ENCODE measurements at regions of chr13 and their contacts with region 1.

Region 1: DNA sequence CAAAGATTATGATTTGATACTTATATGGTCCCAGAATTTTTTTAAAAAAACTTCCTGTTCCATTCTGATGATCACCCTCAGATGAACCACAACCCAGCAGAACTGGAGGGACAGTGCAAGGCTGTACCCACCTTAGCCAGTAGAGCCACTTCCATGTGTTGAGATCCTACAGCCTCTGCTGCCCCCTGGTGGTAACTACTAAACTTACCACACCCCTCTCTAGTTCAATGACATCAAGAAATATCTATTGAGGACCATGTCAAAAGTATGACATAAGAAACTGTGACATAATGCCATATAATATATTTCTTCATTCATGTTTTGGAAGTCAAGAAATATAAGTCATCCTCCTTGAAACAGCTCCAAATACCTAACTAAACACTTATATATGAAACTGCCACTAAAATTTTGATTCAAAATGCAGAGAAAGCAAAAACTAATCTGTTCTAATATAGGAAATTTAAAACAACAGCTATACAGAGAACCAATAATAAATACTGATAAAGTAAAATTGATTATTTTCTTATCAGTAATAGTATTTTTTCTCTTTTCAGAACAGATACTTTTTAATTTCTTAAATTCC is 412.6 kb downstream of the KCTD12 start:
- DNase-seq: peak; percentile 82
- H3K4me3 ChIP-seq: no peak overlapping the region
- H3K27ac ChIP-seq: no peak overlapping the region
- H3K4me1 ChIP-seq: no peaks in the 10 kb centered on the region
- H3K27me3 ChIP-seq: peaks cover 14% of the 10 kb centered on the region
- CTCF ChIP-seq: peak; percentile 78

Region 2: GRCh38 chr13:75687150-75687763 is 786.4 kb before region 1 on chr13:
- CTCF ChIA-PET with region 1: no interaction called
- POLR2A ChIA-PET with region 1: interaction called, 15 read pairs
- intact Hi-C with region 1: no loop called
- DNase-seq: peak; percentile 66
- H3K4me3 ChIP-seq: no peak overlapping the region
- H3K27ac ChIP-seq: no peak overlapping the region
- H3K4me1 ChIP-seq: no peaks in the 10 kb centered on the region
- H3K27me3 ChIP-seq: no peaks in the 10 kb centered on the region
- CTCF ChIP-seq: peak; percentile 66

Region 3: DNA sequence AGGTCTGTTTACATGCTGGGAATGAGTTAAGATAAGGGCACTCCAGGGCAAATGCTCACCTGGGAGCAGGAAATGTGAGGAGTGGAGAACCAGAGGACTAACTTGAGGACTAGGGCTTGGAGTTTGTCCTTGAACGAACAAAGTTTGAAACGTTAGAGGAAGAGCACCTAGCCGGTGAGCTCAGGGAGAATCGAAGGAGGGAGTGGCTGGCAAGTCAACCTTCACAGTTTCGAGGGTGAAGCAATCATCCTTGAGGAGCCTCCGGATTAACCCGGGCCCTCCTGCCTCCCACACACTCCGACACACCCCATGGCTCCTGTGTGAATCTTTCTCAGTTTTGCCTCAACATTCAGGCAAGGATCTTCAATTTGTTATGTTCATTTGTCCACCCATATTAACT is 778.9 kb before region 1 on chr13:
- CTCF ChIA-PET with region 1: no interaction called
- POLR2A ChIA-PET with region 1: no interaction called
- intact Hi-C with region 1: loop called (anchors 2 kb)
- DNase-seq: no peak
- H3K4me3 ChIP-seq: no peak overlapping the region
- H3K27ac ChIP-seq: no peak overlapping the region
- H3K4me1 ChIP-seq: no peaks in the 10 kb centered on the region
- H3K27me3 ChIP-seq: no peaks in the 10 kb centered on the region
- CTCF ChIP-seq: no peak

Region 4: GRCh38 chr13:75876360-75877050 is 597.1 kb before region 1 on chr13:
- CTCF ChIA-PET with region 1: no interaction called
- POLR2A ChIA-PET with region 1: no interaction called
- intact Hi-C with region 1: loop called (anchors 2 kb)
- DNase-seq: peak; percentile 67
- H3K4me3 ChIP-seq: no peak overlapping the region
- H3K27ac ChIP-seq: no peak overlapping the region
- H3K4me1 ChIP-seq: no peaks in the 10 kb centered on the region
- H3K27me3 ChIP-seq: peaks cover 10% of the 10 kb centered on the region
- CTCF ChIP-seq: peak; percentile 93

Region 5: GRCh38 chr13:76016799-76017400 is 456.7 kb before region 1 on chr13:
- CTCF ChIA-PET with region 1: no interaction called
- POLR2A ChIA-PET with region 1: no interaction called
- intact Hi-C with region 1: loop called (anchors 5 kb)
- DNase-seq: peak; percentile 48
- H3K4me3 ChIP-seq: no peak overlapping the region
- H3K27ac ChIP-seq: no peak overlapping the region
- H3K4me1 ChIP-seq: no peaks in the 10 kb centered on the region
- H3K27me3 ChIP-seq: peaks cover 7% of the 10 kb centered on the region
- CTCF ChIP-seq: peak; percentile 74

Region 6: GRCh38 chr13:76053181-76053580 is 420.5 kb before region 1 on chr13:
- CTCF ChIA-PET with region 1: no interaction called
- POLR2A ChIA-PET with region 1: no interaction called
- intact Hi-C with region 1: no loop called
- DNase-seq: no peak
- H3K4me3 ChIP-seq: no peak overlapping the region
- H3K27ac ChIP-seq: no peak overlapping the region
- H3K4me1 ChIP-seq: no peaks in the 10 kb centered on the region
- H3K27me3 ChIP-seq: no peaks in the 10 kb centered on the region
- CTCF ChIP-seq: no peak

Region 7: DNA sequence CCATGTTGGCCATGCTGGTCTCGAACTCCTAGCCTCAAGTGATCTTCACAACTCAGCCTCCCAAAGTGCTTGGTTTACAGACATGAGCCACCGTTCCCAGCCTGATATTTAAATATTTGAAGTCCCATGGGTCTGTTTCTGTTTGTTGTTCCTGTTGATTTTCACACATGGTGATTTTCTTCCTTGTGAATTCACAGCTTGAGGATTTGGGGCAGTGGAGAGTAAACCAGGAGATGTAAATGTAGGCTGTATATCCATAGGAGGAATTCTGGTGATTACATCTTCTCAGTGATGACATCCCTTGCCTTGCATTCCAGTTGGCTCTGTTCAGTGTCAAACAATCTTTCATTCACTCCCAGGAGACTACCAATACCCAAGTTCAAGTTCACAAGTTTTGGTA is 59.3 kb before region 1 on chr13:
- CTCF ChIA-PET with region 1: no interaction called
- POLR2A ChIA-PET with region 1: no interaction called
- intact Hi-C with region 1: no loop called
- DNase-seq: no peak
- H3K4me3 ChIP-seq: no peak overlapping the region
- H3K27ac ChIP-seq: no peak overlapping the region
- H3K4me1 ChIP-seq: no peaks in the 10 kb centered on the region
- H3K27me3 ChIP-seq: peaks cover 10% of the 10 kb centered on the region
- CTCF ChIP-seq: no peak